ENCODE measurements at regions of chr2 and their contacts with region 1.

Region 1: GRCh38 chr2:36966370-36967235 is at the start of gene STRN:
- DNase-seq: peak; percentile 97 to 100 (median 99)
- H3K4me3 ChIP-seq: peak within 1 kb of the TSS; percentile 88 to 89
- H3K4me3 Mint-ChIP-seq: peak within 1 kb of the TSS; percentile 96 to 99 (median 98)
- H3K27ac ChIP-seq: peak within 1 kb of the TSS; percentile 84
- H3K27ac Mint-ChIP-seq: peak within 1 kb of the TSS; percentile 97 to 99 (median 99)
- H3K4me1 ChIP-seq: peaks cover 43% of the 10 kb centered on the region
- H3K4me1 Mint-ChIP-seq: peaks cover 34 to 59% (median 44%) of the 10 kb centered on the region in 4 donors
- H3K27me3 ChIP-seq: no peaks in the 10 kb centered on the region
- H3K27me3 Mint-ChIP-seq: peaks cover 0 to 4% of the 10 kb centered on the region in 2 donors
- total RNA-seq, gene STRN: 29.0 to 33.4 TPM

Region 2: DNA sequence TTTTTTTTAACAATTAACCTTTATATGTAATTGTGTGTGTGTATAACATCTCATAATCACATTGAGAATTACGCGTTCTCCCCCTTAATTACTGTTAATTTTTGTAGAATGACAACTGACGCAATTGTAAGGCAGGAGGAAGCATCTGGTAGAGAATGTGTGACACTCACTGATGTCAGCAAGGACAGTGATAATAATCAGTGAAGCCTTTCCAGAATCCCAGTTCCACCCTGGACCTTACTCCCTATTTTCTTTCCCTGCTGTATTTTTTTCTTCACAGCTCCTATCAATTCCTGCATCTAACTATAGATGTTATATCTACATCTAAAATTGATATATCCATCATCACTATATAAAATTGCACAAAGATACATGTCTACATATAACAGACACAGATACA is 15.9 kb after region 1 on chr2:
- CTCF ChIA-PET with region 1: no interaction called
- POLR2A ChIA-PET with region 1: interaction called, 17 read pairs
- intact Hi-C with region 1: no loop called
- DNase-seq: no peak
- H3K4me3 ChIP-seq: no peak overlapping the region
- H3K4me3 Mint-ChIP-seq: no peak overlapping the region
- H3K27ac ChIP-seq: no peak overlapping the region
- H3K27ac Mint-ChIP-seq: peak overlapping the region in 1 of 7 donors; percentile 15
- H3K4me1 ChIP-seq: no peaks in the 10 kb centered on the region
- H3K4me1 Mint-ChIP-seq: no peaks in the 10 kb centered on the region
- H3K27me3 ChIP-seq: no peaks in the 10 kb centered on the region
- H3K27me3 Mint-ChIP-seq: no peaks in the 10 kb centered on the region

Region 3: DNA sequence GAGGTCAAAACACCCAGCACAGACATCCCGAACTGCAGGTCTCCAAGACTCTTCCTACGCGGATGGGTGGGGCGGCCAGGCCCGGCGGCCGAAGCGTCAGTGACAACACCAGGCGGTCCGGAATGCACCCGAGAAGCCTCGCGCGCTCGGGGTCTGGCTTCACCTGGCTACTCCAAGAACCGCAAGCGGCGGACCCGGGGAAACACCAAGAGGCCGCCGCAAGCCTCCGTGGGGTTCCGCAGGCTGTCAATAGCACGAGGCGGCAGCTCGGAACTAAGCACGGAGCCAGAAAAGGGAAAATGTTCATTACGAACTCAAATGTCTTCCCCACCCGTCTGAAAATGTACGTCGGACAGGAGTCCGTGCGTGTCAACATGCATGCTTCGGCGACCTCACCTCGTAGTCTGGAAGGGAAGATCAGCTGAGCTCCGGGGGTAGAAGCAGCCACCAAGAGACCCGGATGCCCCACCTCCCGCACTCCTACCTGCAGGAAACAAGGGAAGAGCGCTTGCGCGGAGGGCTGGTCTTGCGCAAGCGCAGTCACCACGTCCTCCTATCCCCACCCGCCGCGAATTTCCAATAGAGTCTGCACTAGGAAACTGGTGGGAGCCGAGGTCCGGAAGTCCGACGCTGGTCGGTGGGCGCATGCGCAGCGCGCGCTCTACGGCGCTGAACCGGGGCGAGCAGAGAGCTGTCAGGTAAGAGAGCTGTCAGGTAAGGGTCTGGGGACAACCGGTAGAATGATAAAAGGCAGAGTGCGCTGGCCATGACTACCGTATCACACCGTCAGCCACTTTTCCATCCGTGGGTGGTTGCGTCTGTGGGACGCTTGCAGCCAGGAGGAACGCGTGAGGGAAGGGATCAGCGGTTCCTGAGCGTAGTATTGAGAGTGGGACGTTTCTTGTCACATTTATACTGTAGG is 117.5 kb after region 1 on chr2 and contains the starts of genes GPATCH11 and HEATR5B:
- CTCF ChIA-PET with region 1: no interaction called
- POLR2A ChIA-PET with region 1: interaction called, 16 read pairs
- intact Hi-C with region 1: loop called (anchors 1 kb)
- DNase-seq: peak; percentile 93 to 95 (median 94)
- H3K4me3 ChIP-seq: peak within 1 kb of the TSS; percentile 85 to 94
- H3K4me3 Mint-ChIP-seq: no peak within 1 kb of the TSS
- H3K27ac ChIP-seq: peak within 1 kb of the TSS; percentile 81
- H3K27ac Mint-ChIP-seq: no peak within 1 kb of the TSS
- H3K4me1 ChIP-seq: peaks cover 53% of the 10 kb centered on the region
- H3K4me1 Mint-ChIP-seq: peaks cover 13 to 39% (median 28%) of the 10 kb centered on the region in 4 donors
- H3K27me3 ChIP-seq: no peaks in the 10 kb centered on the region
- H3K27me3 Mint-ChIP-seq: no peaks in the 10 kb centered on the region
- total RNA-seq, gene GPATCH11: 17.3 to 18.9 TPM
- total RNA-seq, gene HEATR5B: 52.6 to 55.2 TPM

Region 4: GRCh38 chr2:37231241-37232130 is 264.9 kb after region 1 on chr2 and contains the starts of genes CEBPZ and NDUFAF7:
- CTCF ChIA-PET with region 1: no interaction called
- POLR2A ChIA-PET with region 1: no interaction called
- intact Hi-C with region 1: loop called (anchors 1 kb)
- DNase-seq: peak; percentile 85 to 94 (median 88)
- H3K4me3 ChIP-seq: peak within 1 kb of the TSS; percentile 94 to 98
- H3K4me3 Mint-ChIP-seq: no peak within 1 kb of the TSS
- H3K27ac ChIP-seq: peak within 1 kb of the TSS; percentile 86
- H3K27ac Mint-ChIP-seq: no peak within 1 kb of the TSS
- H3K4me1 ChIP-seq: peaks cover 46% of the 10 kb centered on the region
- H3K4me1 Mint-ChIP-seq: peaks cover 22 to 41% (median 32%) of the 10 kb centered on the region in 4 donors
- H3K27me3 ChIP-seq: no peaks in the 10 kb centered on the region
- H3K27me3 Mint-ChIP-seq: no peaks in the 10 kb centered on the region
- total RNA-seq, gene CEBPZ: 68.5 to 70.9 TPM
- total RNA-seq, gene NDUFAF7: 36.8 to 37.9 TPM

Region 5: GRCh38 chr2:38377050-38377828 is 1410.6 kb after region 1 on chr2 and contains the start of gene ATL2:
- CTCF ChIA-PET with region 1: no interaction called
- POLR2A ChIA-PET with region 1: interaction called, 3 read pairs
- intact Hi-C with region 1: loop called (anchors 10 kb)
- DNase-seq: peak; percentile 91 to 97 (median 94)
- H3K4me3 ChIP-seq: peak within 1 kb of the TSS; percentile 67 to 85
- H3K4me3 Mint-ChIP-seq: peak within 1 kb of the TSS; percentile 93 to 100 (median 96)
- H3K27ac ChIP-seq: peak within 1 kb of the TSS; percentile 89
- H3K27ac Mint-ChIP-seq: peak within 1 kb of the TSS; percentile 90 to 98 (median 97)
- H3K4me1 ChIP-seq: peaks cover 63% of the 10 kb centered on the region
- H3K4me1 Mint-ChIP-seq: peaks cover 45 to 81% (median 65%) of the 10 kb centered on the region in 4 donors
- H3K27me3 ChIP-seq: no peaks in the 10 kb centered on the region
- H3K27me3 Mint-ChIP-seq: no peaks in the 10 kb centered on the region
- total RNA-seq, gene ATL2: 51.5 to 64.3 TPM